CD8-positive, alpha-beta T cell (primary cell): ENCODE measurements at regions of chr1 and their contacts with region 1.

Region 1: DNA sequence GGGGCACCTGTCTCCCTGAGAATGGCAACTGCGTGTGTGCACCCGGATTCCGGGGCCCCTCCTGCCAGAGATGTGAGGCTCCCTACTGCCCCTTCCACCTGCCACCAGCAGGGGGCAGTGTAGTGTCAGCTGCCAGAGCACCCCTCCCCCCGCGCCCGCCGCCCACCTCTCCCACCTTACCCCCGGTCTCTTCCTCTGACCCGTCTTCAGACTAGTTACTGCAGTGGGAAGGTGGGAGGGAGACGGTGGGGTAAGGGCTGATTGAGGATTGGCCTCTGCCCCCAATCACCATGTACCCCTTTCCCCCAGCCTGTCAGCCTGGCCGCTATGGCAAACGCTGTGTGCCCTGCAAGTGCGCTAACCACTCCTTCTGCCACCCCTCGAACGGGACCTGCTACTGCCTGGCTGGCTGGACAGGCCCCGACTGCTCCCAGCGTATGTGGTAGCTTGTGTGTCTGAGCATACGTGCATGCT is 10.1 kb upstream of the LRRC71 start:
- DNase-seq: peak; percentile 19 to 72 (median 55)
- ATAC-seq: peak; percentile 73
- H3K4me3 ChIP-seq: no peak overlapping the region
- H3K4me3 Mint-ChIP-seq: no peak overlapping the region
- H3K27ac ChIP-seq: no peak overlapping the region
- H3K27ac Mint-ChIP-seq: no peak overlapping the region
- H3K4me1 ChIP-seq: no peaks in the 10 kb centered on the region
- H3K4me1 Mint-ChIP-seq: no peaks in the 10 kb centered on the region
- H3K27me3 ChIP-seq: peaks cover 0 to 6% of the 10 kb centered on the region in 2 experiments
- H3K27me3 Mint-ChIP-seq: peaks cover 30% of the 10 kb centered on the region
- CTCF ChIP-seq: peak; percentile 74

Region 2: GRCh38 chr1:156970017-156970416 is 59.7 kb after region 1 on chr1:
- CTCF ChIA-PET with region 1: interaction called, 20 read pairs
- POLR2A ChIA-PET with region 1: no interaction called
- intact Hi-C with region 1: loop called in 1 of 2 experiments (anchors 1 kb)
- DNase-seq: peak in 2 of 9 experiments; percentile 10 to 15
- ATAC-seq: no peak
- H3K4me3 ChIP-seq: no peak overlapping the region
- H3K4me3 Mint-ChIP-seq: no peak overlapping the region
- H3K27ac ChIP-seq: no peak overlapping the region
- H3K27ac Mint-ChIP-seq: no peak overlapping the region
- H3K4me1 ChIP-seq: no peaks in the 10 kb centered on the region
- H3K4me1 Mint-ChIP-seq: no peaks in the 10 kb centered on the region
- H3K27me3 ChIP-seq: peaks cover 0 to 2% of the 10 kb centered on the region in 2 experiments
- H3K27me3 Mint-ChIP-seq: peaks cover 8% of the 10 kb centered on the region
- CTCF ChIP-seq: peak; percentile 18